Gastrocnemius medialis (tissue), 4 donors: ENCODE measurements at regions of chr3 and their contacts with region 1.

Region 1: DNA sequence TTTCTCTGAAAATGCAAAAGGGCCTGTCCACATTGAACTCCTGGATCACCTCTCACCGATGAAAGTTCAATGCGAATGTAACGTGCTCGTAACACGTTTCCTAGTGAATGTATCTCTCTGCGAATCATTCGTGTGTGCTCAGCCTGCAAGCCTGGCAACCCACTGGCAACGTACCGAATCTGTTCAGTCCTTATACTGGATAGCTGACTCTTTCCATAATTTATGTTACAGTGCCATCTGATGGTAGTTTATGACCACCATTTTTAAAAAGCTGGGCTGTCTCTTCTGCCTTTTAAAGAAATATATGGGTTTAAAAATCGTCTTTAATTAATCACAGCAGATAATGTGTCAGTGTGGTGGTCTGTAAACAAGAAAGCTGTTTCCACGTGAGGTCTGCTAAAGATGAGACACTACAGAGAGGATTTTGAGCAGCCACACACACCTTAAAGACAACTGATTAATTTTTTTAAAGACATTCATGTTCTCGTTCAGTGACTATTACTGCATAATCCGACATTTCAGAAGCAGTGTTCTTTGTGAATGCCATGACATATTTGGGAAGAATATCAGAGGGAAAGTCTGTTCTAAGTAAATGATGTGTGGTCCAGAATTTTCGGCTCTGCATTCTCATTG is 69.4 kb upstream of the FOXP1 start:
- DNase-seq: peak; percentile 6 to 19
- ATAC-seq: peak in 1 of 2 donors; percentile 51
- H3K4me3 ChIP-seq: no peak overlapping the region
- H3K27ac ChIP-seq: no peak overlapping the region
- H3K4me1 ChIP-seq: peaks cover 5 to 6% of the 10 kb centered on the region in 2 donors
- H3K27me3 ChIP-seq: no peaks in the 10 kb centered on the region
- CTCF ChIP-seq: peak; percentile 8 to 50 (median 32)
- POLR2A ChIP-seq: no peak

Region 2: GRCh38 chr3:70064194-70064779 is 1588.6 kb before region 1 on chr3:
- in situ Hi-C with region 1: loop called in 3 of 4 experiments (anchors 25 kb)
- intact Hi-C with region 1: loop called (anchors 2 kb)
- DNase-seq: no peak
- ATAC-seq: no peak
- H3K4me3 ChIP-seq: no peak overlapping the region
- H3K27ac ChIP-seq: no peak overlapping the region
- H3K4me1 ChIP-seq: no peaks in the 10 kb centered on the region
- H3K27me3 ChIP-seq: peaks cover 0 to 3% (median 0%) of the 10 kb centered on the region in 3 donors
- CTCF ChIP-seq: peak in 3 of 5 experiments; percentile 27 to 54 (median 47)
- POLR2A ChIP-seq: no peak

Region 3: GRCh38 chr3:70531063-70531657 is 1121.7 kb before region 1 on chr3:
- in situ Hi-C with region 1: loop called in 1 of 4 experiments (anchors 25 kb)
- intact Hi-C with region 1: loop called (anchors 5 kb)
- DNase-seq: no peak
- ATAC-seq: no peak
- H3K4me3 ChIP-seq: no peak overlapping the region
- H3K27ac ChIP-seq: no peak overlapping the region
- H3K4me1 ChIP-seq: no peaks in the 10 kb centered on the region
- H3K27me3 ChIP-seq: no peaks in the 10 kb centered on the region
- CTCF ChIP-seq: peak in 3 of 5 experiments; percentile 13 to 45 (median 37)
- POLR2A ChIP-seq: no peak

Region 4: GRCh38 chr3:70550723-70551319 is 1102.1 kb before region 1 on chr3:
- in situ Hi-C with region 1: loop called in 3 of 4 experiments (anchors 5 to 25 kb)
- intact Hi-C with region 1: loop called (anchors 5 kb)
- DNase-seq: peak; percentile 15 to 35
- ATAC-seq: peak in 1 of 2 donors; percentile 75
- H3K4me3 ChIP-seq: no peak overlapping the region
- H3K27ac ChIP-seq: no peak overlapping the region
- H3K4me1 ChIP-seq: no peaks in the 10 kb centered on the region
- H3K27me3 ChIP-seq: no peaks in the 10 kb centered on the region
- CTCF ChIP-seq: peak; percentile 40 to 71 (median 58)
- POLR2A ChIP-seq: no peak

Region 5: DNA sequence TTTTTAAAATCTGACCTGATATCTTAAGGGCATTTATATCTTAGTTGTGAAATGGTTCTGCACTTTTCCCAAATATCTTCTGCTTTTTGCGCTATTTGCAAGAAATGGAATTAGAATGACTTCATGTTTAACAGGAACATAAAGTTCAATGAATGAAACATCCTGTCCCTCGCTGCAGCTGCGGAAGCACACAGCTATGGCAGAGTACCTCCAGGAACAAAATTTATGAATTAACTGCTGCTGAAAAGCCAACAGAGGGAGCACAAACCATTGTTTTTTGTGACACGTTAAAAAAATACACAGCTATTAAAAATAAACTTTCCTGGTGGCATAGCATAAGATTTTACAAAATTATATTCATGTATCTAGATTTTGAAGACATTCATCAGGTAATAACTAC is 936.1 kb before region 1 on chr3:
- in situ Hi-C with region 1: no loop called
- intact Hi-C with region 1: loop called (anchors 2 kb)
- DNase-seq: peak; percentile 13
- ATAC-seq: no peak
- H3K4me3 ChIP-seq: no peak overlapping the region
- H3K27ac ChIP-seq: no peak overlapping the region
- H3K4me1 ChIP-seq: no peaks in the 10 kb centered on the region
- H3K27me3 ChIP-seq: no peaks in the 10 kb centered on the region
- CTCF ChIP-seq: peak in 3 of 5 experiments; percentile 22 to 38 (median 33)
- POLR2A ChIP-seq: no peak

Region 6: DNA sequence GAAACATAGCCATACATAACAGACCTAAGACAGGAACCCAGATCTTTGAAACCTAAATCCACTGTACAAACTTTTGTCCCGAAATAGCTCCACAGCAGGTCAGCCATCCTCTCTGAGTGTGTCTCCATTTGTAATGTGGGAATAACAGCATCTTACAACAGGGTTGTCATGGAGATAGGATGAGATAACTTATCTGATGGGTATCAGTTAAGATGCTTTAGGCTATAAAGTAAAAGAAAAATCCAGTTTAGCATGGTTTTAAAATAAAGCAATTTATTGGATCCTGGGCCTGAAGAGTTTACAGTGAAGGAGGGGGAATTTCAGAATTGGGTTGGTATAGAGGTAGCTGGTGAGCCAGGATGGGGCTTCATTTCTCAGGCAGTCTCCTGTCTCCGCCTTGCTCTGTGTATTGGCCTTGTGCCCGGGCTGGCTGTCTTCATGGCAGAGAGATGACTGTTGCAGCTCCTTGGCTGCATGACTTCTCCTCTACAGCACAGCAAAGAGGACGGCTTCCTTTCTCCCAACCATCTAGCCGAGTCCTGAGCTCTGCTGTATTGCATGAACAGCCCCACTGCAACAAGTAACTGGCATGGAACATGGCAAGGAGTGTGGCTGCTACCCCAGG is 264.0 kb after region 1 on chr3:
- in situ Hi-C with region 1: no loop called
- intact Hi-C with region 1: no loop called
- DNase-seq: no peak
- ATAC-seq: no peak
- H3K4me3 ChIP-seq: no peak overlapping the region
- H3K27ac ChIP-seq: no peak overlapping the region
- H3K4me1 ChIP-seq: no peaks in the 10 kb centered on the region
- H3K27me3 ChIP-seq: no peaks in the 10 kb centered on the region
- CTCF ChIP-seq: no peak
- POLR2A ChIP-seq: no peak